Activated CD4-positive, alpha-beta memory T cell treated with anti-CD3 and anti-CD28 coated beads, Interleukin-2, amount 10 ng/mL, durations not matched to agents 7 days and 5 days (primary cell): ENCODE measurements at regions of chr15 and their contacts with region 1.

Region 1: GRCh38 chr15:90539789-90540188 is 10.1 kb downstream of the CRTC3 start:
- DNase-seq: no peak
- H3K4me3 Mint-ChIP-seq: peak overlapping the region; percentile 84
- H3K27ac Mint-ChIP-seq: peak overlapping the region; percentile 95
- H3K4me1 Mint-ChIP-seq: peaks cover 69% of the 10 kb centered on the region
- H3K27me3 Mint-ChIP-seq: no peaks in the 10 kb centered on the region

Region 2: DNA sequence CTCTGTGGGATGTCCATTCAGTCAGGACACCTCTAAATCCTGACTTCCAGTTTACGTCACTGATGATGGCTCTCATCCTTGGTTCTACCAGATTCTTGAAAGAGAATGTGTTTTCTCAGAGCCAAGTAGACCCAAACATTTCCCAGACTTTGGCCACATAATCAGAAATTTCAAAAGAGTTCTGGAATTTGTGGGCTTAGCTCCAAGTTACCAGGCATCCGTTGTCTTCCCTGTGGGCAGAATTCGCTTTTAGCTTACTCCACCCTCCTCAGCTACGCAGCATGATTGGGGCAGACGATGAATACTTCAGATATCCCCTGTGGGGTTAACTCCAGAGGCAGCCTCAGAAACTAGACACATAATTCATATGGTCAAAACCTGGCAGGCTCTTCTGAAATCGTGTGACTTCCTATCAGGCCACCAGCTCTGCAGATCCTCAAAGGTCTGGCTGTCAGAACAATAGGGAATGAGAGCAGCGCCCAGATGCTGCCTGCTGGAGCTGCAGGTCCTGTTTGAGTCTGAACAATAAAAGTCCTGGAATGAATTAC is 20.5 kb after region 1 on chr15:
- CTCF ChIA-PET with region 1: interaction called, 7 read pairs
- POLR2A ChIA-PET with region 1: interaction called, 14 read pairs
- DNase-seq: no peak
- H3K4me3 Mint-ChIP-seq: no peak overlapping the region
- H3K27ac Mint-ChIP-seq: peak overlapping the region; percentile 42
- H3K4me1 Mint-ChIP-seq: peaks cover 80% of the 10 kb centered on the region
- H3K27me3 Mint-ChIP-seq: no peaks in the 10 kb centered on the region